B cell (primary cell): ENCODE measurements at regions of chr1 and their contacts with region 1.

Region 1: GRCh38 chr1:110060034-110060661 is 10.3 kb downstream of the ALX3 start:
- DNase-seq: peak; percentile 76
- ATAC-seq: peak; percentile 73
- H3K4me3 ChIP-seq: no peak overlapping the region
- H3K4me3 Mint-ChIP-seq: no peak overlapping the region
- H3K27ac ChIP-seq: no peak overlapping the region
- H3K27ac Mint-ChIP-seq: no peak overlapping the region
- H3K4me1 ChIP-seq: no peaks in the 10 kb centered on the region
- H3K4me1 Mint-ChIP-seq: no peaks in the 10 kb centered on the region
- H3K27me3 ChIP-seq: no peaks in the 10 kb centered on the region
- H3K27me3 Mint-ChIP-seq: peaks cover 1% of the 10 kb centered on the region
- CTCF ChIP-seq: peak; percentile 85

Region 2: GRCh38 chr1:110040548-110040947 is 19.6 kb before region 1 on chr1:
- CTCF ChIA-PET with region 1: interaction called, 67 read pairs
- POLR2A ChIA-PET with region 1: interaction called, 5 read pairs
- intact Hi-C with region 1: no loop called
- DNase-seq: no peak
- ATAC-seq: no peak
- H3K4me3 ChIP-seq: no peak overlapping the region
- H3K4me3 Mint-ChIP-seq: no peak overlapping the region
- H3K27ac ChIP-seq: no peak overlapping the region
- H3K27ac Mint-ChIP-seq: no peak overlapping the region
- H3K4me1 ChIP-seq: peaks cover 3 to 4% of the 10 kb centered on the region in 2 donors
- H3K4me1 Mint-ChIP-seq: peaks cover 13% of the 10 kb centered on the region
- H3K27me3 ChIP-seq: no peaks in the 10 kb centered on the region
- H3K27me3 Mint-ChIP-seq: no peaks in the 10 kb centered on the region
- CTCF ChIP-seq: no peak

Region 3: DNA sequence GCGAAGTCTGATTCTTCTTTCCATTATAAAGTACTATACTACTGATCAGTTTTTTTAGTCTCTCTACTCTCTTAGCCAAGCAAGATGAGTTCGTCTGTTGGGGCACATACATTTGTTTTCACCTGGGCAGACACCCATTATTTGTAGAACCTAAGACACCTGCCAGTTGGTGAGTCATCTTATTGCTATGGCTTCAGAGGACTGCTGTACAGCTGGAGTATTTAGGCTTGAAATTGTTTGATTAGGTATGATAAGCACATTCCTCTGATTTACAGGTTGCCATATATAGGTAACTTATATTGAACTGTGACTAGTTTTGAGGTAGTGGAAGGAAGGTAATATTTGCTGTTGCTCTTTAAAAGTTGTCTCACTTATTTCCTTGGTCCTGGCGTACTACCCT is 296.3 kb after region 1 on chr1:
- CTCF ChIA-PET with region 1: no interaction called
- POLR2A ChIA-PET with region 1: no interaction called
- intact Hi-C with region 1: no loop called
- DNase-seq: no peak
- ATAC-seq: no peak
- H3K4me3 ChIP-seq: no peak overlapping the region
- H3K4me3 Mint-ChIP-seq: no peak overlapping the region
- H3K27ac ChIP-seq: no peak overlapping the region
- H3K27ac Mint-ChIP-seq: no peak overlapping the region
- H3K4me1 ChIP-seq: no peaks in the 10 kb centered on the region
- H3K4me1 Mint-ChIP-seq: peaks cover 27% of the 10 kb centered on the region
- H3K27me3 ChIP-seq: no peaks in the 10 kb centered on the region
- H3K27me3 Mint-ChIP-seq: no peaks in the 10 kb centered on the region
- CTCF ChIP-seq: no peak